HEK293 (cell line): ENCODE measurements at regions of chr4 and their contacts with region 1.

Region 1: GRCh38 chr4:147866532-147867271 is 134.8 kb downstream of the ARHGAP10 start:
- H3K4me3 ChIP-seq: no peak overlapping the region
- H3K27ac ChIP-seq: no peak overlapping the region
- H3K4me1 ChIP-seq: no peaks in the 10 kb centered on the region
- CTCF ChIP-seq: peak; percentile 76

Region 2: GRCh38 chr4:147590249-147590920 is 276.3 kb before region 1 on chr4:
- CTCF ChIA-PET with region 1: interaction called, 23 read pairs
- POLR2A ChIA-PET with region 1: no interaction called
- H3K4me3 ChIP-seq: no peak overlapping the region
- H3K27ac ChIP-seq: no peak overlapping the region
- H3K4me1 ChIP-seq: no peaks in the 10 kb centered on the region
- CTCF ChIP-seq: 0 out of 2 replicates have a peak, but pooled peaks have one; percentile 42

Region 3: DNA sequence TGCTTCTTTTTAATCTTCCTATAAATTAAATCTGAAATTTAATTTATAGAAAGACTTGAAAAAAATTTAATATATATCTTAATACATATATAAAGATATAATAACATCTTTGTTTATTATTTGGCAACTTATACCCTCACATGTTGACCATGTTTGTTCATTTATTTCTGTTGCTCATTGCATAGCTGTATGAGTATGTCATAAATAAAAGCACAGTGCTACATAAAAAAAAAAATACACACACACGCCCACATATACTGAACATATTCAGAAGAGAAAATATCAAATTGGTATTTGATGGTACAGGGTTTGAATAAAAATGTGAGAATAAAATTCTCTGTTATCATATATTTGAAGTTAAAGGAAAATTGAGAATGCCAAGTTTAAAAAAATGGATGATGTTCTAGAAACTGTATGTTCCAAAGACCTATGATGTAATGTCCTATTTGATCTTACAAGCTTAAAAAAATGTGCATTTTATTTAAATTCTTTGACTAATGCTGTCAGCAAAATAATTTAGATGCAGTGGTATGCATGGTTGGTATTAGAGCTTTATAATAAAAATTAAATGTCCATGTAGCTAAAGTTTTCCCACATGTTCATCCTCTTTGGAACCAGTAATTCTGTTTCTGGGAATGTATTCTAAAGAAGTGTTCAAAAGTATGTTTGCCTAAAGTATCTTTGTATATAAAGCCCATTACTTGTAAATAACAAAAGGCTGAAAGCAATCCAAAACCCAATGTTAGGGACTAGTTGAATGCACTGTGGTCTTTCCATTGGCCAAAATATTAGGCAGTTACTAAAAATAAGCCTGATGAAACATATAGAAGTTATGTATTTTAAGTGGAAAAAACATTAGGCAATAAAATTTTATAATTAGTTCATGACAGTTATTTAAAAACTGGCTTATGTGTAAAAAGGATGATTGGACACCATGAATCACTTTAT is 236.6 kb before region 1 on chr4:
- CTCF ChIA-PET with region 1: interaction called, 10 read pairs
- POLR2A ChIA-PET with region 1: interaction called, 3 read pairs
- H3K4me3 ChIP-seq: no peak overlapping the region
- H3K27ac ChIP-seq: no peak overlapping the region
- H3K4me1 ChIP-seq: no peaks in the 10 kb centered on the region
- CTCF ChIP-seq: no peak

Region 4: DNA sequence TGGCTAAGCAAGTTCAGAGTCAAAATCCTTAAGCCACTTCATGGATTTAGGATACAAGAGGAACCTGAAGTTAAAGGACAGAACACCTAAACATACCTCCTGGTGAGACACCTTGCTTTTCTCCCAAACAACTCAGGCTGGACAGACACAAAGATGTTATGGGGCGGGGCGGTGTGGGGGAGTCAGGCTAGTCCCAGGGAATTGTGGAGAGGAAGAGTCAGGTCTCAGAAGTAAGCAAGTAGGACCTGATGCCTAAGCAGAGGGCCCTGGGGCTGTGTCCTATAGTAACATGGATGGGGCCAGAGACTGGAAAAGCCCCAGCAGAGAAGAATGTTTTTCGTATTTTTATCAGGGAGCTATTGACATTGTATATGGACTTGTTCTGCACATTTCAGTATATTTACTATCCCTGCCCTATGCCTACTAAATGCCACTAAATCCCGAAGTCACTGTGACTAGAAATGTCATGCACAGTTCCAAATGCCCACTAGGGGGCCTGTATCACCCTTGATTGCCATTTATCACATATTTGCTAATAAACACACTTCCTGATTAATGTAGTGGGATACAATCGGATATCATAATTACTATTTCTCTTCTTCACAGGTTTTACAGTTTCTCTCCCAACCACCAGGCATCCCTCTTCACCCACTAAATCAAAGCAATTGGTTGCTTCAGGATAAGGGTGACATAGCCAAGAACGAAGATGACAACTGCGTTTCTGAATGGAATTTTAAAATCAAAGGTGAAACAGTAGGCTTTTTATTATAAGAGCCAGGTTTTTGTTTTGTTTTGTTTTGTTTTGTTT is 158.6 kb before region 1 on chr4:
- CTCF ChIA-PET with region 1: interaction called, 45 read pairs
- POLR2A ChIA-PET with region 1: no interaction called
- H3K4me3 ChIP-seq: no peak overlapping the region
- H3K27ac ChIP-seq: no peak overlapping the region
- H3K4me1 ChIP-seq: no peaks in the 10 kb centered on the region
- CTCF ChIP-seq: 0 out of 2 replicates have a peak, but pooled peaks have one; percentile 8

Region 5: DNA sequence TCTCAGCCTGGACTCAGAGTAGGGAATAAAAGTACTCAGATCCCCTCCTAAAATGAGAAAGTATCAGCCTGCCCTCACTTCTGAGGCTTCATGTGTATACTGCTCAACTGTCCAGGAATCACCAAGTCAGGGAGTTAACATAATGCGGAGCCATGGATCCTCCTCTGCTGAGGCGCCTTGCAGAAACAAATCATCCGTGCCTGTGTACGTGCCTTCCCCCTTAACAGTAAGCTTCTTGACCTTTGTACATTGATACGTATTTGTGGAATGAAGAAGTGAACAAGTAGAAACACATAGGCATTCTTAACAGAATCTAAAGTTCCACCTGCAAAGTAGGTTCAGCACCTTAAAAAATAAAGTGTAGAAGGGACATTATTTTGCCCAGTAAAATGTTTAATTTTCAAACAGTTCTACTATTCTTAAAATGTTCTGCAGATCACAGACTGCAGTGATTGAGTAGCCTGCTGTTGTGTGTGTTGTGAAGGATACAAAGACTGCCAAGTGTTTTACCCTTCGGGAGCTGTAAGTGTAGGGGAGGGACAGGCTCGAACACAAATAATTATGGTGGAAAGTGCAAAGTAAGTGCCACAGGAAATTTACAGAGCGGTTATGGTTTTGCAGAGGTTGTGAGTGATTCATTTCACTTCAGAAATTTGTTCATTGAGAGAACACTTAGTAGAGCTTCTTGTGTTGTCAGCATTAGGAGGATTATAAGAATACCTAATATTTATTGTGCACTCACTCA is 73.0 kb before region 1 on chr4:
- CTCF ChIA-PET with region 1: interaction called, 11 read pairs
- POLR2A ChIA-PET with region 1: no interaction called
- H3K4me3 ChIP-seq: no peak overlapping the region
- H3K27ac ChIP-seq: 0 out of 2 replicates have a peak overlapping the region, but pooled peaks have one; percentile 16
- H3K4me1 ChIP-seq: peaks cover 14% of the 10 kb centered on the region; the same call in 1 of the 2 replicates
- CTCF ChIP-seq: no peak

Region 6: DNA sequence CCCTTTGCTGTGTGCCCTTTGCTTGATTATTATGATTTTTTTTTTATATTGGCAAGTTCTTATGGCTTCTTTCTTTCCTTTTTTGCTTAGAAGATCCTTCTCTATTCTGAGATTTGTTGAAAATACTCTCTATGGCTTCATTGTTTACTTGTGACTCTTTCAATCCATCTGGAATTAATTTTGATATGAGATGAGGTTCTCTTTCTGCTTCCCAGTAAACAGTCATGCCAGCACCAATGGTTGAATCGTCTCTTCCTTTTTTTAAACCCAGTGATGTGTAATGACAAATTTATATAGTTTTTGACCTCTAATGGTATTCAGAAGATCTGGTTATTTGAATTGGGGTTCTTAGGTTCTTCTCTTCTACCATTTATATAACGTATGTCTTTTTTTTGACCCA is 13.0 kb before region 1 on chr4:
- CTCF ChIA-PET with region 1: interaction called, 29 read pairs
- POLR2A ChIA-PET with region 1: no interaction called
- H3K4me3 ChIP-seq: no peak overlapping the region
- H3K27ac ChIP-seq: no peak overlapping the region
- H3K4me1 ChIP-seq: peaks cover 2% of the 10 kb centered on the region; the same call in 1 of the 2 replicates
- CTCF ChIP-seq: no peak